Activated CD4-positive, alpha-beta T cell treated with anti-CD3 and anti-CD28 coated beads, Interleukin-2, amount 10 ng/mL, durations not matched to agents 24 days and 14 days (primary cell): ENCODE measurements at regions of chr12 and their contacts with region 1.

Region 1: GRCh38 chr12:107356266-107356936 is 263.1 kb upstream of the CRY1 start:
- DNase-seq: peak; percentile 70
- H3K4me3 Mint-ChIP-seq: peak overlapping the region; percentile 4
- H3K27ac Mint-ChIP-seq: no peak overlapping the region
- H3K4me1 Mint-ChIP-seq: peaks cover 65% of the 10 kb centered on the region
- H3K27me3 Mint-ChIP-seq: no peaks in the 10 kb centered on the region

Region 2: GRCh38 chr12:107328442-107329133 is 27.8 kb before region 1 on chr12:
- intact Hi-C with region 1: loop called (anchors 1 kb)
- DNase-seq: no peak
- H3K4me3 Mint-ChIP-seq: peak overlapping the region; percentile 19
- H3K27ac Mint-ChIP-seq: no peak overlapping the region
- H3K4me1 Mint-ChIP-seq: peaks cover 75% of the 10 kb centered on the region
- H3K27me3 Mint-ChIP-seq: no peaks in the 10 kb centered on the region

Region 3: DNA sequence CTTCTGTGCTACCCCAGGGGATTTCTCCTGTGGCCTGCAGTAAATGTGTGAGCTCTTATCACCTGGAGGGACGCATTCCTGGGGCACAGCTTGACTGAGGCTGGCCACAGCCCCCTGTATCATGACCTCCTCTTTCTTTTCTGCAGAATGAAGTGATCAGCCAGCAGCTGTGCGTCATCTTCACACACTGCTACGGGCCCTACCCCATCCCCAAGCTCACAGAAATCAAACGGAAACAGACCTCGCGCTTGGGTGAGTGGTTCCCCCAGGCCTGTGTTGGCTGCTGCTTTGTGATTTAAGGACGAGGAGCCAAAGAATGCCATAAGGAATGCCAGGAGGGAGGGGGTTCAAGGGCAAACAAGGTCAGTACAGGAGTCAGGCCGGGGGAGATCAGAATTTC is 278.7 kb after region 1 on chr12:
- intact Hi-C with region 1: no loop called
- DNase-seq: no peak
- H3K4me3 Mint-ChIP-seq: no peak overlapping the region
- H3K27ac Mint-ChIP-seq: no peak overlapping the region
- H3K4me1 Mint-ChIP-seq: no peaks in the 10 kb centered on the region
- H3K27me3 Mint-ChIP-seq: no peaks in the 10 kb centered on the region